Heart right ventricle (tissue), 16 donors: ENCODE measurements at regions of chr7 and their contacts with region 1.

Region 1: DNA sequence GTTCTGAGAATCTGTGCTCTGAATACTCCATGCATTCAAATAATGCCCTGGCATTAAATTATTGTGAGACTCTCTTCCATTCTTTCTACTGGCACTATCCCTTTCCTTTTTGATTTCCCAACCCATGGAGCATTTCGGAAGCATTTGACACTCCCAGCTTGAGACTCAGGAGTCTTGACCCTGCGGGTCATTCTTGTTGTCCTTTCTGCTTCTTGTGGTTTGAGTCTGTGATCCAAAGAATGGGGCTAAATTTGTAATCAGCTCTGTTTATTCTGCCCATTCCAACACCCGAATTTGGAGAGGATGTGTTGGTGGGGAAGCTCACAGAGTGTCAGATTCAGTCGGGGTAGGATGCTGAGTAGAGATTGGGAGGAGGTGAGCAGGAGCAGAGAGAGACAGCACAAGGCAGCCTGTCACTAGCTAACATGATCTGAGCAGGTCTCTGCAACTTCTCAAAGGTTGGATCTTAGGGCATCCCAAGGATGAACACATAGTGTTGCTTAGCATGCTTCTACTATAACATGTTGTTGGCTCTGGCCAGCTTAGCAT is 80.4 kb upstream of the BMPER start:
- DNase-seq: no peak
- ATAC-seq: no peak
- H3K4me3 ChIP-seq: no peak overlapping the region
- H3K27ac ChIP-seq: no peak overlapping the region
- H3K4me1 ChIP-seq: no peaks in the 10 kb centered on the region
- H3K27me3 ChIP-seq: no peaks in the 10 kb centered on the region
- CTCF ChIP-seq: no peak

Region 2: GRCh38 chr7:33411020-33411419 is 414.0 kb before region 1 on chr7:
- intact Hi-C with region 1: no loop called
- DNase-seq: no peak
- ATAC-seq: no peak
- H3K4me3 ChIP-seq: no peak overlapping the region
- H3K27ac ChIP-seq: no peak overlapping the region
- H3K4me1 ChIP-seq: peaks cover 0 to 10% (median 0%) of the 10 kb centered on the region in 9 donors
- H3K27me3 ChIP-seq: no peaks in the 10 kb centered on the region
- CTCF ChIP-seq: no peak

Region 3: GRCh38 chr7:34061175-34061574 is 236.2 kb after region 1 on chr7:
- intact Hi-C with region 1: loop called in 1 of 10 experiments (anchors 5 kb)
- DNase-seq: no peak
- ATAC-seq: peak in 1 of 8 donors; percentile 24
- H3K4me3 ChIP-seq: no peak overlapping the region
- H3K27ac ChIP-seq: no peak overlapping the region
- H3K4me1 ChIP-seq: peaks cover 0 to 13% (median 3%) of the 10 kb centered on the region in 9 donors
- H3K27me3 ChIP-seq: no peaks in the 10 kb centered on the region
- CTCF ChIP-seq: no peak